MCF 10A (cell line): ENCODE measurements at regions of chr5 and their contacts with region 1.

Region 1: GRCh38 chr5:111364992-111365391 is 140.8 kb downstream of the CAMK4 start:
- DNase-seq: peak; percentile 30
- H3K4me3 Mint-ChIP-seq: no peak overlapping the region
- H3K27ac Mint-ChIP-seq: no peak overlapping the region
- H3K4me1 Mint-ChIP-seq: peaks cover 13% of the 10 kb centered on the region
- H3K27me3 Mint-ChIP-seq: no peaks in the 10 kb centered on the region
- CTCF ChIP-seq: no peak

Region 2: DNA sequence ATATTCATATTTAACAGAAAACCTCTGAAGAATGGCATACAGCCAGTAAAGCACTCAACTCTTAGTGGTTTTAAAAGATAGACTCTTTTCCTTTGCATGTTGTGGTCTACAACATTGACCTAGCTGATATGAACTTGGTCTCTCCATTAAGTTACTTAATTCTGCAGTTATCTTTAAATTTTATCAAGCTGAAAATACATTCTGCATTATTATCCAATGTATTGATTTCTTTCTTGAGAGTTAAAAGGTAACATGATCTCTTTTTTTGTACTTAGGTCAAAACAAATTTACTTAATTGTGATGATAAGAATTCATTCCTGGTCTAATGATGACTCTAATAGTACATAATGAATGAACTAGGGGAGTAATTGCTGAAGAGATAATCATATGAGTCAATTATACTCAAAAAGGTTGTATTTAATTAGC is 14.4 kb after region 1 on chr5:
- CTCF ChIA-PET with region 1: no interaction called
- POLR2A ChIA-PET with region 1: interaction called, 12 read pairs
- intact Hi-C with region 1: no loop called
- DNase-seq: no peak
- H3K4me3 Mint-ChIP-seq: no peak overlapping the region
- H3K27ac Mint-ChIP-seq: no peak overlapping the region
- H3K4me1 Mint-ChIP-seq: no peaks in the 10 kb centered on the region
- H3K27me3 Mint-ChIP-seq: no peaks in the 10 kb centered on the region
- CTCF ChIP-seq: no peak

Region 3: GRCh38 chr5:111394580-111394979 is 29.6 kb after region 1 on chr5:
- CTCF ChIA-PET with region 1: no interaction called
- POLR2A ChIA-PET with region 1: no interaction called
- intact Hi-C with region 1: loop called (anchors 2 kb)
- DNase-seq: peak; percentile 61
- H3K4me3 Mint-ChIP-seq: no peak overlapping the region
- H3K27ac Mint-ChIP-seq: no peak overlapping the region
- H3K4me1 Mint-ChIP-seq: peaks cover 7% of the 10 kb centered on the region
- H3K27me3 Mint-ChIP-seq: no peaks in the 10 kb centered on the region
- CTCF ChIP-seq: no peak